ENCODE measurements at regions of chr17 and their contacts with region 1.

Region 1: DNA sequence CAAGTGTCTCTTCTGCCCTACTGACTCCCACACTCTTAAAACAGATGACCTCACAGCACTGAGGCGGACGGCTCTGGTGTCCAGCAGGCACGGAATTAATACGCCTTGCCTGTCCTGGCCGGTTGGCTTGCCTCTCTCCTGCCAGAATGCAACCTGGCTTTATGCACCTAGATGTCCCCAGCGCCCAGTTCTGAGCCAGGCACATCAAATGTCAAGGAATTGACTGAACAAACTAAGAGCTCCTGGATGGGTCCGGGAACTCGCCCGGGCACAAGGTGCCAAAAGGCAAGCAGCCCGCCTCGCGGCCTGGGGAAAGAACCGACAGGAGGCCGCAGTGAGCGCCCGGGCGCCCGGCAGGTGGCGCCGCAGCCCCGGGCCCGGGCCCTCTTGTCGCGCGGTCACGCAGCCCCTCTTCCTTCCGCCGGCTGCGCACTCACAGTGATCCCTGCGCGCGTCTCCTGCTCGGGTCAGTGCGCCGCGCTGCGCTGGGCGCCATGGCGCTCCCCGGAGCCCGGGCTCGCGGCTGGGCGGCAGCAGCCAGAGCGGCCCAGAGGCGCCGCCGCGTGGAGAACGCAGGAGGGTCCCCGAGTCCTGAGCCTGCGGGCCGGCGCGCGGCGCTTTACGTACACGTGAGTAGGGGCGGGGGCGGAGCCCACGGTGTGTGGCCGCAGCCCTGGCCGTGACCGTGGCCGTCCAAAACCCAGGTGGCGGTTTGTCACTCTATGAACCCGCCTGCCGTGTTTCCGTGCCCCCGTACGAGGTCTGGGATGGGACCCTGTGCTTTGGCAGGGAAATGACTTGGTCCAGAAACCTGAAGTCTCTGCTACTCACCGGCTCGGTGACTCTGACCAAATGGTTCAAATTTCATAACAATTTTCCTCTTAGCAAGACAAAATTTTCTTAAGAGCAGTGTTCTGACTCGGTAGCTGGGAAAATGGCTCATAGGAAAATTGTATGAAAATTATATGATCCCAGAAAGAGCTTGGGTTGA is at the start of gene RSAD1:
- DNase-seq: peak; percentile 93 to 94
- H3K4me3 ChIP-seq: peak within 1 kb of the TSS; percentile 27 to 85 (median 52)
- H3K27ac ChIP-seq: peak within 1 kb of the TSS; percentile 86 to 91 (median 87)
- H3K4me1 ChIP-seq: peaks cover 26 to 33% of the 10 kb centered on the region in 2 donors
- H3K27me3 ChIP-seq: no peaks in the 10 kb centered on the region
- CTCF ChIP-seq: peak; percentile 57 to 95 (median 90)
- POLR2A ChIP-seq: peak; percentile 57 to 86
- total RNA-seq, gene RSAD1: 30.2 to 50.1 (median 34.7) TPM

Region 2: DNA sequence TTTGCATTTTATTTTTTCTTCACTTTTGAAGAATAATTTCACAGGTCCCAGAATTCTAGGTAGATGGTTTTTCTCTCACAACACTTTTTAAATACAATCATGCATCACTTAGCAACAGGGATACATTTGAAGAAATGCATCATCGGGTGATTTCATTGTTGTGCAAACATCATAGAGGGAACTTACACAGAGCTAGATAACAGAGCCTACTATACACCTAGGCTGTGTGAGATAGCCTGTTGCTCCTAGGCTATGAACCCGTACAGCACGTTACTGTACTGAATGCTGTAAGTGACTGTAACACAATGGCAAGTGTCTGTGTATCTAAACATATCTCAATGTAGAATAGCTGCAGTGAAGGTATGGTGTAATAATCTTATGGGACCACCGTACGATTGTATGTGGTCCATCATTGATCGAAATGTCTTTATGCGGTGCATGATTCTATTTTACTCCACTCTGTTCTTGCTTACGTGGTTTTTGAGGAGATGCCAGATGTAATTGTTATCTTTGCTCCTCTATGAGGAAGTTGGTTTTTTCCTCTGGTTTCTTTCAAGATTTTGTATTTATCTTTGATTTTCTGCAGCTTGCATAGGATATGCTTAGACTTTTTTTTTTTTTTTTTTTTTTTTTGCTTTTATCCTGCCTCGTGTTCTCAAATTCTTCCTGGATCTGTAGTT is 239.9 kb before region 1 on chr17:
- intact Hi-C with region 1: no loop called
- DNase-seq: no peak
- H3K4me3 ChIP-seq: no peak overlapping the region
- H3K27ac ChIP-seq: no peak overlapping the region
- H3K4me1 ChIP-seq: no peaks in the 10 kb centered on the region
- H3K27me3 ChIP-seq: no peaks in the 10 kb centered on the region
- CTCF ChIP-seq: no peak
- POLR2A ChIP-seq: no peak

Region 3: DNA sequence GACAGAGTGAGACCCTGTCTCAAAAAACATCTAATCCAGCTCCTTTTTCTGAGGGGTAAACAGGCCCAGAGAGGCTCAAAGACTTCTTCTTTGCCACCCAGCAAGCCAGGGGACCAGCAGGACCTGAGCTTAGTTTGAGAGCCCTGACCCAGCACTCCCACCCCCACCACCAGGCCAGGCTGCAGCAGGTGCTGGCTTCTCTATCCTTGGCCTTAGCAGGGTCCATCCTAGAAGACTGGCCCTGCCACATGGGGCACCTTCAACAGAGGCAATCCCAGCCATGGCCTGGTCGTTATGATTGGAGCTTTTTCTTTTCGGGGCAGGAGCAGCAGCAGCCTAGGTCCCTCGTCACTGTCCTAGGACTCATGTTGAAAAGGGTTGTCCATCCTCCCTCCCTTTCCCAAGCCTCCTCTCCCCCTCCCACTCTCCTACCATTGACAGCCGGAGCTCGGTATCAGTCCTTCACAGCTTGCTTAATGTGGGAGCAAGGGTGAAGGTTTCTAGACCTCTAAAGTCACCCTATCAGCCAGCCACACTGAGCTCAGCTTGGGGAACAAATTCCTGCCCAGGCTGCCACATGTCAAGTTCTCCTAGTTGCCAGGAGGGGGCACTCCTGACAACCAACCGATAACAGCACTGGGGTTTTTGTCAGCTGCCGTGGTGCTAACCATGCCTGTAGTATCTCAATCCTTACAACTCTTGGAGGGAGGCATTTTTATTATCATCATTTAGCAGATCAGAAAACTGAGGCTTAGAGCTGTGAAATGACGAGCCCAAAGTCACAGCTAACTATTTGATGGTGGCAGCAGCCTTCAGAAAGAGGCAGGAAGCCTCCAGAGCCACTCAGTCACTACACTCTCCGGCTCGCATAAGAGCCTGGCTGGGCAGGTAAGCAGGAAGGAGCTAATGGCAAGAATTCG is 116.9 kb before region 1 on chr17:
- intact Hi-C with region 1: loop called (anchors 5 kb)
- DNase-seq: peak; percentile 59 to 64
- H3K4me3 ChIP-seq: no peak overlapping the region
- H3K27ac ChIP-seq: no peak overlapping the region
- H3K4me1 ChIP-seq: peaks cover 0 to 6% of the 10 kb centered on the region in 2 donors
- H3K27me3 ChIP-seq: no peaks in the 10 kb centered on the region
- CTCF ChIP-seq: peak in 5 of 6 experiments; percentile 53 to 77 (median 64)
- POLR2A ChIP-seq: no peak

Region 4: DNA sequence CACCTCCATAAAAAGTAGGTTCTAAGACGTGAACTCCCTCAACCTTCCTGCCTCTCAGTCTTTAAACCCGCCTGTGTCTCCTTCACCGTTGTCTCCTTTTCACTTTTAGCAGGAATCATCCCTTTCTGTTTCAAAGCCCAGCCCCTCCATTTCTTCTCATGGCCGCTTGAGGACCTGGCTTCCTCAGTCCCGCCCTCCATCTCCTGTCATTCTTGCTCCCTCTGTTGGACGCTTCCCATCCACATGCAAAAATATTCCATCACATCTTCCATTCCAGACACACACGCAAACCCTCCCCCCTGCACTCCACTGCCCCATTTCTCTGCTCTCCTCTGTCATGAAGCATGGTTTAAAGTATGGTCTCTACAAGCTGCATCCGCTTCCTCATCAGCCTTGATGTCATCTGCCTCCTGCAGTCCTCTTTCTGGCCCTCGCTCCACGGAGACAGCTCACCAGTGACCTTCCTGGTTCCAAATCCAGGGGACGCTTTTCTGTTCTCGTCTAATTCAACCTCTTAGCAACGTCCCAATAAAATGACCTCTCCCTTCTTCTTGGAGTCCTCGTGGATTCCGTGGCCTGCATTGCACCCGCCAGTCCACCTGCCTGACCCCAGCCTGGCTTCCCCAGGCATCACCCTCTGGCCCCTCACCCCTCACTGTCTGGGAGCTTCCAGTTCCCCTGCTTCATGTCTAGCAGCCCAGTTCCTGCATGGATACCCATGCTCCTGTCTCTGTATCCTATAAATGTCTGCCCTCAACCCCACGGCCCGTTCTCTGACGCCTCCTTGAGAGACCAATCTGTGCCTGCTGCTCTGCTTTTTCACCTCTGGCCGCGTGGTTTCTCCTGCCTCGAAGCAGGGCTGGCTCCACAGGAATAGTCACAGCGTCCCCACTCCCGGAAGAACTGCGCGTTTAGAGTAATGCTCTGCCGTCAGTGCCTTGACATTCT is 202.9 kb after region 1 on chr17:
- intact Hi-C with region 1: loop called (anchors 10 kb)
- DNase-seq: peak; percentile 48 to 49
- H3K4me3 ChIP-seq: no peak overlapping the region
- H3K27ac ChIP-seq: no peak overlapping the region
- H3K4me1 ChIP-seq: peaks cover 7 to 11% of the 10 kb centered on the region in 2 donors
- H3K27me3 ChIP-seq: no peaks in the 10 kb centered on the region
- CTCF ChIP-seq: peak in 5 of 6 experiments; percentile 12 to 65 (median 55)
- POLR2A ChIP-seq: no peak